Caco-2 (cell line): ENCODE measurements at regions of chr16 and their contacts with region 1.

Region 1: GRCh38 chr16:72400257-72400882 is 228.4 kb upstream of the PMFBP1 start:
- DNase-seq: peak; percentile 49 to 65
- H3K4me3 ChIP-seq: no peak overlapping the region
- H3K4me3 Mint-ChIP-seq: no peak overlapping the region
- H3K27ac Mint-ChIP-seq: no peak overlapping the region
- H3K4me1 ChIP-seq: no peaks in the 10 kb centered on the region
- H3K4me1 Mint-ChIP-seq: no peaks in the 10 kb centered on the region
- H3K27me3 ChIP-seq: no peaks in the 10 kb centered on the region
- H3K27me3 Mint-ChIP-seq: no peaks in the 10 kb centered on the region
- CTCF ChIP-seq: peak; percentile 82 to 83

Region 2: GRCh38 chr16:72467157-72467759 is 66.9 kb after region 1 on chr16:
- CTCF ChIA-PET with region 1: interaction called, 19 read pairs
- POLR2A ChIA-PET with region 1: no interaction called
- intact Hi-C with region 1: loop called (anchors 1 kb)
- DNase-seq: peak in 1 of 2 experiments; percentile 53
- H3K4me3 ChIP-seq: no peak overlapping the region
- H3K4me3 Mint-ChIP-seq: no peak overlapping the region
- H3K27ac Mint-ChIP-seq: no peak overlapping the region
- H3K4me1 ChIP-seq: no peaks in the 10 kb centered on the region
- H3K4me1 Mint-ChIP-seq: no peaks in the 10 kb centered on the region
- H3K27me3 ChIP-seq: no peaks in the 10 kb centered on the region
- H3K27me3 Mint-ChIP-seq: no peaks in the 10 kb centered on the region
- CTCF ChIP-seq: peak; percentile 67 to 84